ENCODE measurements at regions of chr10 and their contacts with region 1.

Region 1: GRCh38 chr10:96678725-96679124 is 41.6 kb downstream of the PIK3AP1 start:
- DNase-seq: no peak
- ATAC-seq: no peak
- H3K4me3 ChIP-seq: no peak overlapping the region
- H3K4me3 Mint-ChIP-seq: no peak overlapping the region
- H3K27ac ChIP-seq: no peak overlapping the region
- H3K27ac Mint-ChIP-seq: no peak overlapping the region
- H3K4me1 ChIP-seq: peaks cover 6% of the 10 kb centered on the region
- H3K4me1 Mint-ChIP-seq: peaks cover 8% of the 10 kb centered on the region
- H3K27me3 ChIP-seq: no peaks in the 10 kb centered on the region
- H3K27me3 Mint-ChIP-seq: no peaks in the 10 kb centered on the region
- CTCF ChIP-seq: no peak

Region 2: DNA sequence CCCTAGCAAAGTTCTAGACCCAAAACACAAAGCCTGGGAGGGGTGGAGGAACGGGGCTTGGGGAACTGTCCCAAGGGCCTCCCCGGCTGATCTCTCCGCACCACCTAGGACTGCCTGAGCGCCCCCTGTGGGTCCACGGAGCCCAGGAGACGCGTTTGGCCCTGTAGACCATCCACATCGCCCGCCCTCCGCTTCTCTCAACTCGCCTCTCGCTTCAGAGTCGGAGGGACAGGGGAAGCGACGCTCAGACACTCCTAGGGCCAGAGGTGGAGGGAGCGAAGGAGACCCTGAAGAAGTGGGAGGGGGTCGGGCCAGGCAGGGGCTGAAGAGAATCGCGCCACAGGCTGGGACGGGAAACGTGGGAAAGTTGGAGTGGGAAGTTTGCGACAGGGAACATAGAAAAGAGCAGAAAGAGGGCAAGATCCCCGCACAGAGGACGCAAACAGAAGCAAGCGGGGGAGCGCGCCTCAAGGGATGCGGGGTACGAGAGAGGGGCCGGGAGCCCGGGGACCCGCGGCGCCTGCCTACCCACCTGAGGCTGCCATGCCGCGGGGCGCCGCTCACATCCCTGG is 41.2 kb after region 1 on chr10:
- CTCF ChIA-PET with region 1: no interaction called
- POLR2A ChIA-PET with region 1: interaction called, 3 read pairs
- intact Hi-C with region 1: loop called in 1 of 2 experiments (anchors 5 kb)
- DNase-seq: peak; percentile 27 to 80 (median 58)
- ATAC-seq: peak; percentile 53
- H3K4me3 ChIP-seq: peak overlapping the region; percentile 53 to 81
- H3K4me3 Mint-ChIP-seq: peak overlapping the region; percentile 95
- H3K27ac ChIP-seq: peak overlapping the region in 1 of 2 experiments; percentile 88
- H3K27ac Mint-ChIP-seq: peak overlapping the region; percentile 88
- H3K4me1 ChIP-seq: peaks cover 7% of the 10 kb centered on the region
- H3K4me1 Mint-ChIP-seq: peaks cover 40% of the 10 kb centered on the region
- H3K27me3 ChIP-seq: no peaks in the 10 kb centered on the region
- H3K27me3 Mint-ChIP-seq: no peaks in the 10 kb centered on the region
- CTCF ChIP-seq: peak; percentile 28